ENCODE measurements at regions of chr7 and their contacts with region 1.

Region 1: DNA sequence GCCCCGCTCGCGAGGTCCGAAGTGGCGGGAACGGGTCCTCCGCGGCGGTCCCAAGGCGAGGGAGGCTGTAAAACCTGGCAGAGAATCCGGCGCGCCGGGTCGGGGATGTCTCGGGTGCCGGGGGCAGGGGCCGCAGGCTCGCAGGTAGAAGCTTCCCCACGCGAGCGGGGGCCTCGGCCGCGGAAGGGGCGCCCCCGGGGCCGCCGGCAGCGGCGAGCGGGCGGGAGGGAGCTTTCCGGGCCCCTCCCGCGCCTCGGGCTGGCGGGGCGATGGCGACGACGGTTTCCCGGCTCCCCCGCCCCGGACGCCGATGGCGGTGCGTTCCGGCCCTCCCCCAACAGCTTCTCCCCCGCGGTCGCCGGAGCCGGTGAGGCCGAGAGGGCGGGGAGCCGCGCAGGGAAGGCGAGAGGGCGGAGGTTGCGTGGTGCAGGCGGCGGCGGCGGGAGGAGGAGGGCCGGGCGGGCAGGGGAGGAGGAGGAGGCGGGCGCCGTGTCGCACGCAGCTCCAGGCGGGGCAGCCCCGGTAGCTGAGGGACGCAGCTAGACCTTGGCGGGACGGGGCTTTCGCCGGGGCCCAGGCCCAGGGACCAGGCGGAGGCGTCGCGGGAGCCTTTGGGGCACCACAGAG is at the start of gene CUL1:
- DNase-seq: no peak
- H3K4me3 ChIP-seq: peak within 1 kb of the TSS; percentile 90 to 96
- H3K27ac ChIP-seq: peak within 1 kb of the TSS; percentile 98
- H3K4me1 ChIP-seq: peaks cover 42% of the 10 kb centered on the region
- H3K27me3 ChIP-seq: no peaks in the 10 kb centered on the region
- CTCF ChIP-seq: no peak
- POLR2A ChIP-seq: peak in 1 of 2 donors; percentile 52
- total RNA-seq, gene CUL1: 38.5 TPM

Region 2: DNA sequence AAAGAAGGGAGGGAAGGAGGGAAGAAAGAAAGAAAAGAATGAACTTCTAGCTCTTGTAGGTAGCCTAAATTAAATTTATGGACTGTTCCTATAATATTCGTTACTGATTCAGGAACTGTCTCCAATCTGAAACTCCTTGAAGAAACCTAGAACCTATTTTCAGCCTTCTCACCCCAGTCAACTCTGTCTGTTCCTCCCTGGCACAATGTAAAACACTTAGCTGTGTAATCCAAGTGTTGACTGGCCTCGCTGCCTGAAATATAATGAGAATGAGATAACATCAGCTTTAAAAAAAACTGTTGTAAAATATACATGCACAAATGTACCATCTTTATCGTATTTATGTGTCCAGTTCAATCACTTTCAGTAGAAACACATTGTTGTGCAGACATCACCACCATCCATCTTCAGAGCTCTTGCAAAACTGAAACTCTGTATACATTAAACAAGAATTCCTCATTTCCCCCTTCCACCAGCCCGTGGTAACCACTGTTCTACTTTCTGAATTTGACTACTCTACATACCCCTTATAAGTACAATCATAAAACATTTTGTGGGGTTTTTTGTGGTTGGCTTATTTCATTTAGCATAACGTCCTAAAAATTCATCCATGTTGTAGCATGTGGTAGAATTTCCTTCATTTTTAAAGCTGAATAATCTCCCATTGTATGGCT is 114.2 kb before region 1 on chr7:
- intact Hi-C with region 1: no loop called
- DNase-seq: no peak
- H3K4me3 ChIP-seq: no peak overlapping the region
- H3K27ac ChIP-seq: no peak overlapping the region
- H3K4me1 ChIP-seq: no peaks in the 10 kb centered on the region
- H3K27me3 ChIP-seq: no peaks in the 10 kb centered on the region
- CTCF ChIP-seq: no peak
- POLR2A ChIP-seq: no peak

Region 3: DNA sequence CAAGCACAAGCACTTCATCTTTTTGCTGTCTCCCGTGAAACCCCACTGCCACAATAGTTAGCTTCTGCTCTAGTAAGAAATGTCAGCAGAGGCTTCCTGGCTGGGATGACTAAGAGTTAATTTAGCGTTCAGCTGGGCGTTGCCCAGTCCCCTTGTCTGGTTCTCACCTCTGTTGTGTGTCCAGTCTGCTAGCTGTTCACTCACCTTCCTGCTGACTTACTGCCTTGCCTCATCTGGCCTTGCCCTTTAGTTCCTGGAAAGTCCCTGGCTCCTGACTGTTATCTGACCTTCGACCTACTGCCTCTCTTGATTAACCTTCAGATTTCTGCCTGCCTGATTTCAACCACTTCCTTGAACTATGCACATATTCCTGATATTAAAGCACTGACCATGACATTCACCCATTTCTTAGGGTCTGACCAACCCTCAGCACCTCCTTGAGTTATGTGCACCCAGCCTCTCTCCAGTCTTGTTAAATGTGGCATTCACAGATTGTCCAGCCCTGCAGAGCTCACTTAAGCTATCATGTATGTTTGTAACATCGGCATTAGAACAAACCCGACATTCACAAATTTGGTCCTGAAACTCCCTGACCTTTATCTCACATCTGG is 77.7 kb before region 1 on chr7:
- intact Hi-C with region 1: no loop called
- DNase-seq: no peak
- H3K4me3 ChIP-seq: no peak overlapping the region
- H3K27ac ChIP-seq: no peak overlapping the region
- H3K4me1 ChIP-seq: peaks cover 6% of the 10 kb centered on the region
- H3K27me3 ChIP-seq: no peaks in the 10 kb centered on the region
- CTCF ChIP-seq: no peak
- POLR2A ChIP-seq: no peak

Region 4: DNA sequence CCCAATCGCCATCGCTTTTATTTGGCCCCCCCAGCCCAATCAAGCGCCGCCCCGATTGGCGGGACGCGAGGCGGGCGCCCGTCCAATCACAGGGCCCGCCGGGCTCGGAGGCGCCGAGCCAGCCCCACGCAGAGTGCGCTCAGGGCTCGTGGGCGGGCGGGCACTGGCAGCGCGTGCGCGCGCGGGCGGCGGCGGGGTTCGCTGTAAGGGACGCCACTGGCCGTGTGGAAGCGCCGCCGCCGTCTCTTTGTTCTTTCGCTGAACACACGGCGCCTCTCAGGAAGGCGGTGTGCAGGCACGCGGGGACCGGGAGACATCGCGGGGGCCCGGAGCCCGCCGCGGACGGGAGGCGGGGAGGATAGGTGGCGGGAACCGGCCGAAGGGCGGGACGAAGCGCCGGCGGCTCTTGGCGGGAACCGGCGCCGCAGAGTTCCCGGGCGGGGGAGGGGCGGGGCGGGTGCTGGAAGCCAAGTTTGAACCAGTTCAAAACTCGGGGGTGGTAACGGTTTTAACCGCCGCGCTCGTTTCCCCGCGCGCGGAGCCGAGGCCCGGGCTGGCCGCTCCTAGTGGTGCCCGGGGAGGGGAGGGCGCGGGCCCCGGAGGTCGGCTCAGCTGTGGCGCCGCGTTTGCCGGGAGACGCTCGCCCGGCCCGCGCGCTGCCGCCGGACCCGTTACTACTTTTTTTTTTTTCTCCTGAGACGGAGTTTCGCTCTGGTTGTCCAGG is 186.0 kb after region 1 on chr7:
- intact Hi-C with region 1: loop called (anchors 1 kb)
- DNase-seq: peak in 1 of 2 donors; percentile 93
- H3K4me3 ChIP-seq: peak overlapping the region; percentile 93 to 99
- H3K27ac ChIP-seq: peak overlapping the region; percentile 84
- H3K4me1 ChIP-seq: peaks cover 18% of the 10 kb centered on the region
- H3K27me3 ChIP-seq: no peaks in the 10 kb centered on the region
- CTCF ChIP-seq: no peak
- POLR2A ChIP-seq: peak in 1 of 2 donors; percentile 66